AG04449 (cell line): ENCODE measurements at regions of chr22 and their contacts with region 1.

Region 1: GRCh38 chr22:50485201-50486131 is 1.2 kb upstream of the MIOX start:
- DNase-seq: no peak
- H3K4me3 ChIP-seq: no peak overlapping the region
- CTCF ChIP-seq: no peak

Region 2: GRCh38 chr22:50474668-50475492 is 10.6 kb before region 1 on chr22 and contains the start of gene SBF1:
- CTCF ChIA-PET with region 1: no interaction called
- POLR2A ChIA-PET with region 1: no interaction called
- DNase-seq: no peak
- H3K4me3 ChIP-seq: peak within 1 kb of the TSS; percentile 68
- CTCF ChIP-seq: no peak

Region 3: GRCh38 chr22:50498322-50498890 is 12.9 kb after region 1 on chr22:
- CTCF ChIA-PET with region 1: interaction called, 24 read pairs
- POLR2A ChIA-PET with region 1: no interaction called
- DNase-seq: no peak
- H3K4me3 ChIP-seq: no peak overlapping the region
- CTCF ChIP-seq: peak; percentile 63